HEK293 (cell line): ENCODE measurements at regions of chr1 and their contacts with region 1.

Region 1: DNA sequence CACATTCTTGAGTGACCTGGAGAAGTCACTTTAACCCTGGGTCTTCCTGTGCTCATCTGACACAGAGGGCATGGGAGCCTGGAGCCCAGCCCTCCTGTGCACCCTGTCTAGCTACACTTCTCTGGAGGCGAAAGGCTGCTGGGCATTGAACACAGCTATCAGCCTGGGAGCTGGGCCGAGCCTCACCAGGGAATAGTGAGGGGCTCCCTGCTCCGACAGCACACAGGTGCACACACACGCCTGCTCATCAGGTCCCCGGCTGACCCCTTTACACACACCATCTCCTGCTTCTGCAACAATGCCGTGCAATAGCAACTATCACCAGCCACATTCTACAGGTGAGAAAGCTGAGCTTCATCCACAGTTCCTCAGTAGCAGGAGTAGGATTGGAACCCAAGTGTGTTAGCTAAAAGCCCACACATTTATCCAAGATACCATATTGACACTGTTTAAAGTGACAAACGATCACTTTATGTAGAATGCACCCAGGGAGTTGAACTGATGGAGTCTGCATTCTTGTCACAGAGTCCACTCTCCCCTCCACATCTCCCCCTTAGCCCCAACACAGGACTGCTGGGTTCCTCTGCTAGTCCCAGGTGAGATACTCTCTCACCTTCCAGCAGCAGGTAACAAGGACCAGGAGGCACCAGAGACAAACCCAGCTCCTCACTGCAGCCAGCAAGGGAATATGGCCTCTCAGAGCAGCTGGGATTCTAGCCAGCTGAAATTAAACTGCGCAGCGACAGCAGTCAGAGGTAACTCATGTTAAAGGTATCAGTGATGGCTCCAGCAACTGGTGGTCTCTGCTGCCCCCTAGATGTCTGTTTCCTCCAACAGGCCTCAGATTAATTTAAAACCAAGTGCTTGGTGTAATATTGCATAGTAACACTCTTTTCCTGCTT is 18.3 kb upstream of the CAPN8 start:
- H3K4me3 ChIP-seq: no peak overlapping the region
- H3K27ac ChIP-seq: no peak overlapping the region
- H3K4me1 ChIP-seq: no peaks in the 10 kb centered on the region
- CTCF ChIP-seq: peak; percentile 95

Region 2: DNA sequence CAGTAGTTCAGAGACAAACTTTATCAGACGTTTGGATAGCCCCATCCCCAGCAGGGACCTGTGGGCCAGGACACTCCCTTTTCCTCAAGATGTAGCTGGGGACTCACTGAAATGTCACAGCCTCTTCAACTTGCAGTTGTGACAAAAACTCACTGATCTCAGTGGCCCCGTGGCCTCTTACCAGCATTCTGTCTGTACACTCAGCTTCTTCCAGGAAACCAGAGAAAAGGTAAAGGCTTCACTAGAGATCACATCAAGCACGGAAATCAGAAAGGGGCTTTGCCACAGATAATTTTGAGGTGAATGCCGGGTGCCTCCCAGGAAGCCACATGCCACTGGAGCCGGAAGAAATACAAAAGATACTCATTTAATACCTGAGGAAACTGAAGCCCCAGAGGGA is 168.4 kb before region 1 on chr1:
- CTCF ChIA-PET with region 1: interaction called, 15 read pairs
- POLR2A ChIA-PET with region 1: no interaction called
- H3K4me3 ChIP-seq: no peak overlapping the region
- H3K27ac ChIP-seq: no peak overlapping the region
- H3K4me1 ChIP-seq: peaks cover 13% of the 10 kb centered on the region; the same call in 1 of the 2 replicates
- CTCF ChIP-seq: no peak

Region 3: GRCh38 chr1:223556414-223557129 is 127.3 kb before region 1 on chr1:
- CTCF ChIA-PET with region 1: interaction called, 29 read pairs
- POLR2A ChIA-PET with region 1: no interaction called
- H3K4me3 ChIP-seq: no peak overlapping the region
- H3K27ac ChIP-seq: no peak overlapping the region
- H3K4me1 ChIP-seq: no peaks in the 10 kb centered on the region
- CTCF ChIP-seq: no peak

Region 4: GRCh38 chr1:223670458-223671168 is 13.2 kb before region 1 on chr1:
- CTCF ChIA-PET with region 1: interaction called, 29 read pairs
- POLR2A ChIA-PET with region 1: no interaction called
- H3K4me3 ChIP-seq: no peak overlapping the region
- H3K27ac ChIP-seq: no peak overlapping the region
- H3K4me1 ChIP-seq: no peaks in the 10 kb centered on the region
- CTCF ChIP-seq: peak; percentile 44; the same call in 1 of the 2 replicates